Naive thymus-derived CD8-positive, alpha-beta T cell (primary cell): ENCODE measurements at regions of chr1 and their contacts with region 1.

Region 1: DNA sequence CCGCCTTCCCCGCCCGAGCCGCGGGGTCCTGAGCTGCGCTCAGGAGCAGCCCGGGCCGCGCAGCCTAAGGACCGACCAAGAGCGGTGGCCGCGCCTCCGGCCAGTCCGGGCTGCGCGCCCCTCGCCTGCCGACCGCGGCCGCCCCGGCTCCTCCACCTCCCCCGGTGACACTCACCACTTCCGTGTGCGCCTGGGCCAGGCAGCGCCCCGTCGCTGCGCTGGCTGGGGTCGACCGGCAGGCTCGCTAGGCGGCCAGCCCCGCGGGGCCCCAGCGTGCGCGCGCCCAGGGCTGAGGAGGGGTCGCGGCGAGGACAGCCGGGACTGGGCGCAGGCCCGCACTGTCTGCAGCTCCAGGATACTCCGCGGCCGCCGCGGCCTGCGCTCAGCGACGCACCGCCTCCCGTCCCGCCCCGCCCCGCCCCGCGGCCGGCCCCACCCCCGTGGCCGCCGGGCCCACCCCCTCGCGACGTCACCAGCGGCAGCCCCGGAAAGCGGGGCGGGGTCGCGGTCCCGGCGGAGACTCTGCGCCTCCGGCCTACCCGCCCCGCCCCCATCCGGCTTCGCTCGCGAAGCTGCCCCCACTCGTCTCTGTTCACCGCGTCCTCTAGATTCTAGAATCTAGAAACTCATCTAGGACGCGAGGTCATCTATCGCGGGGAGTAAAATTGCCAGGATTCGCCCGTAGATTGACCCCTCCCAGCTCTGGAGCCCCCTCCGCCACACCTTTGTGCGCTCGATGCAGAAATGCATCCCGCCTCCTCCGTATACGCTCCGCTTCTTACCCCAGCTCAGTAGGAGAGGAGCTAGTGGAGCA is at the start of gene JAK1:
- DNase-seq: peak; percentile 80 to 97 (median 90)
- ATAC-seq: peak; percentile 75 to 76
- H3K4me3 Mint-ChIP-seq: peak within 1 kb of the TSS; percentile 77 to 96 (median 94)
- H3K27ac Mint-ChIP-seq: peak within 1 kb of the TSS; percentile 93 to 98 (median 97)
- H3K4me1 Mint-ChIP-seq: peaks cover 33 to 58% (median 53%) of the 10 kb centered on the region in 4 donors
- H3K27me3 Mint-ChIP-seq: no peaks in the 10 kb centered on the region
- polyA plus RNA-seq, gene JAK1: 162 to 244 (median 174) TPM

Region 2: DNA sequence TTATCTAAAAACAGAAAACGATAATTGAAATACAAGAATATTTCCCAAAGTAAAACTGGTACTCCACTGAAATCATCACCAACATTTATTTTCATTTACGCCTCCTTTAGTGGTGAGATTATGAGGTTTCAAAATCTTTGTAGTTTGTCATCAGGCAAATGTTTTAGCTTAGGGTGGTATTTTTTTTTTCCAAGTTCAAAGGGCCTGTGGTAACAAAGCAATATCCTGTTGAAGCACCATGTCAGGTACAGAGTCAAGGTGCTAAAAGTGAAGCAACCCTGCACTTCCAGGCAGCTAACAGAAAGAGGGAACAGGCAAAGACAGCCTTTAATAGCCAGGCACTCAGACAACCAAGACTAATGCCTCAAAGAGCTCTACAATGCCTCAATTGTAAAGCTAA is 89.2 kb before region 1 on chr1:
- POLR2A ChIA-PET with region 1: interaction called, 43 read pairs
- DNase-seq: peak in 8 of 10 donors; percentile 38 to 91 (median 68)
- ATAC-seq: peak; percentile 96 to 98
- H3K4me3 Mint-ChIP-seq: peak overlapping the region; percentile 50 to 82 (median 70)
- H3K27ac Mint-ChIP-seq: peak overlapping the region; percentile 49 to 94 (median 84)
- H3K4me1 Mint-ChIP-seq: peaks cover 30 to 89% (median 78%) of the 10 kb centered on the region in 4 donors
- H3K27me3 Mint-ChIP-seq: no peaks in the 10 kb centered on the region

Region 3: DNA sequence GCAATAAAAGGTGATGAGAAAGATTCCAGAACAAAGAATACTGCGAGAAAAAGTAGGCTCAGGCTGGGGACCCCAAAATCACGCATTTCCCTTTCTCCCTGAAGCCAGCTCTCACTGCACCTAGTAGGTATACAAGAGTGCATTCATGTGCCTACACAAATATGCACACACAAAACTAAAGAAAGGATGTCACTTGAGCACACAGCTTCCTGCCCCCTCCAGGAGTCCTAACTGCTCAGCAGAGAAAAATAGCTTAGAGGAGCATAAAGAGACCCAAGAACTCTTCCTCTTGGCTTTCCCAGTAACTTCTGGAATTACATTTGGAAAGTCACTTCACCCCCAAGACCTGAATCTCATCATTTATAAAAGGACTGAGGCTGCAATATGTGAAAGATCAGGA is 38.0 kb before region 1 on chr1:
- POLR2A ChIA-PET with region 1: interaction called, 10 read pairs
- DNase-seq: no peak
- ATAC-seq: peak in 1 of 2 donors; percentile 46
- H3K4me3 Mint-ChIP-seq: peak overlapping the region in 9 of 10 donors; percentile 15 to 69 (median 35)
- H3K27ac Mint-ChIP-seq: peak overlapping the region in 3 of 10 donors; percentile 22 to 75 (median 33)
- H3K4me1 Mint-ChIP-seq: peaks cover 51 to 93% (median 90%) of the 10 kb centered on the region in 4 donors
- H3K27me3 Mint-ChIP-seq: no peaks in the 10 kb centered on the region

Region 4: GRCh38 chr1:64956010-64956640 is 10.2 kb before region 1 on chr1:
- POLR2A ChIA-PET with region 1: interaction called, 20 read pairs
- DNase-seq: no peak
- ATAC-seq: no peak
- H3K4me3 Mint-ChIP-seq: no peak overlapping the region
- H3K27ac Mint-ChIP-seq: no peak overlapping the region
- H3K4me1 Mint-ChIP-seq: peaks cover 23 to 55% (median 50%) of the 10 kb centered on the region in 4 donors
- H3K27me3 Mint-ChIP-seq: no peaks in the 10 kb centered on the region

Region 5: DNA sequence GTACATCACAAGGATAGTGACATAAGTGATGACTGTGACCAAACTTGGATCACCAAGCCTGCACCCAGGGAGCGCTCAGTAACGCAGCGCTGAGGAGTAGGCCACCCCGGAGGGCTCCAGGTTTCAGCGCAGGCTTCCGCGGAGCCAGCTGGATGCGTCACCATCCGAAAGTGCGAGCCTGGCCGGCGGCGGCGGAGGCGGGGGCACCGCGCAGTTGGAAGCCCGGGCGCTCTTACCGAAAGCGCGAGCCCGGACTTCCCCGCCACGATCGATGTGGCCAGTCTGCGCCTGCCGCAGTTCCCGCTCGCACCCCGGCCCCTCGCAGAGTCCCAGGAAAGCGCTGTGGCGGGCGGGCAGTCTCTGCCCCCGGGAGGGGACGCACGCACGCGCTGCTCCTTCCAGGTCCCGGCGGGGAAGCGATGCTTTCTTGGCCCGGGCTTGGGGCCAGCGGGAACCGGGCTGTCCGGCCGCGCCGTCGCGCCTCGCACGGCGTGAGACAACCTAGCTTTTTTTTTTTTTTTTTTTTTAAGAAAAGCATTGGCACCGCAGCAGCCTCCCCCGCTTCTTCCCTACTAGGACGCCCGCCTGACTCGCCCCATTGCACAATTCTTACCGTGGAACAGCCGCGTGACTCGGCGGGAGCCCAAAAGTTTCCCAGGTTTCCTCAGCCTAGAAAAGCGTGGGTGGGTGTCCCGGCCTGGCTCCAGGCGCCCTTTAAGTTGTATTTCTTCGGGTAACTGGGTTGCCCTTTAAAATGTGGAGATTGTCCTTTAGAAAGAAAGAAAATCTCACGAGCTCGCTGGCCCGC is 36.3 kb after region 1 on chr1:
- POLR2A ChIA-PET with region 1: interaction called, 14 read pairs
- DNase-seq: peak; percentile 58 to 81 (median 68)
- ATAC-seq: peak; percentile 82
- H3K4me3 Mint-ChIP-seq: peak overlapping the region; percentile 77 to 93 (median 86)
- H3K27ac Mint-ChIP-seq: peak overlapping the region; percentile 73 to 99 (median 92)
- H3K4me1 Mint-ChIP-seq: peaks cover 14 to 32% (median 29%) of the 10 kb centered on the region in 4 donors
- H3K27me3 Mint-ChIP-seq: no peaks in the 10 kb centered on the region

Region 6: GRCh38 chr1:65048335-65048734 is 82.0 kb after region 1 on chr1:
- POLR2A ChIA-PET with region 1: interaction called, 11 read pairs
- DNase-seq: no peak
- ATAC-seq: no peak
- H3K4me3 Mint-ChIP-seq: no peak overlapping the region
- H3K27ac Mint-ChIP-seq: peak overlapping the region in 6 of 10 donors; percentile 5 to 82 (median 37)
- H3K4me1 Mint-ChIP-seq: peaks cover 39 to 68% (median 55%) of the 10 kb centered on the region in 4 donors
- H3K27me3 Mint-ChIP-seq: no peaks in the 10 kb centered on the region

Region 7: GRCh38 chr1:65067491-65068201 is 101.3 kb after region 1 on chr1:
- POLR2A ChIA-PET with region 1: interaction called, 35 read pairs
- DNase-seq: peak; percentile 35 to 85 (median 68)
- ATAC-seq: peak; percentile 33 to 45
- H3K4me3 Mint-ChIP-seq: peak overlapping the region; percentile 88 to 98 (median 94)
- H3K27ac Mint-ChIP-seq: peak overlapping the region; percentile 97 to 100 (median 98)
- H3K4me1 Mint-ChIP-seq: peaks cover 31 to 65% (median 59%) of the 10 kb centered on the region in 4 donors
- H3K27me3 Mint-ChIP-seq: no peaks in the 10 kb centered on the region